ENCODE measurements at regions of chr6 and their contacts with region 1.

Region 1: GRCh38 chr6:118651282-118652050 is at the start of gene CEP85L:
- DNase-seq: peak; percentile 82 to 88
- H3K4me3 ChIP-seq: peak within 1 kb of the TSS; percentile 71
- H3K4me3 Mint-ChIP-seq: peak within 1 kb of the TSS; percentile 87
- H3K27ac Mint-ChIP-seq: no peak within 1 kb of the TSS
- H3K4me1 ChIP-seq: peaks cover 4% of the 10 kb centered on the region; the same call in 1 of the 2 replicates
- H3K4me1 Mint-ChIP-seq: no peaks in the 10 kb centered on the region
- H3K27me3 ChIP-seq: no peaks in the 10 kb centered on the region; the same call in 1 of the 2 replicates
- H3K27me3 Mint-ChIP-seq: peaks cover 10% of the 10 kb centered on the region
- CTCF ChIP-seq: no peak
- total RNA-seq, gene CEP85L: 0.29 and 0.46 TPM in 2 replicates

Region 2: GRCh38 chr6:118668761-118669385 is 17.4 kb after region 1 on chr6:
- CTCF ChIA-PET with region 1: no interaction called
- POLR2A ChIA-PET with region 1: no interaction called
- intact Hi-C with region 1: no loop called
- DNase-seq: no peak
- H3K4me3 ChIP-seq: no peak overlapping the region
- H3K4me3 Mint-ChIP-seq: no peak overlapping the region
- H3K27ac Mint-ChIP-seq: no peak overlapping the region
- H3K4me1 ChIP-seq: no peaks in the 10 kb centered on the region
- H3K4me1 Mint-ChIP-seq: no peaks in the 10 kb centered on the region
- H3K27me3 ChIP-seq: no peaks in the 10 kb centered on the region; the same call in 1 of the 2 replicates
- H3K27me3 Mint-ChIP-seq: peaks cover 10% of the 10 kb centered on the region
- CTCF ChIP-seq: no peak

Region 3: GRCh38 chr6:118709859-118710350 is 58.4 kb after region 1 on chr6:
- CTCF ChIA-PET with region 1: no interaction called
- POLR2A ChIA-PET with region 1: no interaction called
- intact Hi-C with region 1: no loop called
- DNase-seq: no peak
- H3K4me3 ChIP-seq: no peak overlapping the region
- H3K4me3 Mint-ChIP-seq: no peak overlapping the region
- H3K27ac Mint-ChIP-seq: no peak overlapping the region
- H3K4me1 ChIP-seq: no peaks in the 10 kb centered on the region
- H3K4me1 Mint-ChIP-seq: peaks cover 6% of the 10 kb centered on the region
- H3K27me3 ChIP-seq: no peaks in the 10 kb centered on the region
- H3K27me3 Mint-ChIP-seq: peaks cover 18% of the 10 kb centered on the region
- CTCF ChIP-seq: no peak

Region 4: GRCh38 chr6:118776607-118777549 is 125.4 kb after region 1 on chr6:
- CTCF ChIA-PET with region 1: no interaction called
- POLR2A ChIA-PET with region 1: no interaction called
- intact Hi-C with region 1: loop called (anchors 10 kb)
- DNase-seq: peak in 1 of 2 experiments; percentile 65
- H3K4me3 ChIP-seq: no peak overlapping the region
- H3K4me3 Mint-ChIP-seq: no peak overlapping the region
- H3K27ac Mint-ChIP-seq: no peak overlapping the region
- H3K4me1 ChIP-seq: no peaks in the 10 kb centered on the region
- H3K4me1 Mint-ChIP-seq: no peaks in the 10 kb centered on the region
- H3K27me3 ChIP-seq: no peaks in the 10 kb centered on the region
- H3K27me3 Mint-ChIP-seq: peaks cover 19% of the 10 kb centered on the region
- CTCF ChIP-seq: peak; percentile 62 to 71